ENCODE measurements at regions of chr3 and their contacts with region 1.

Region 1: DNA sequence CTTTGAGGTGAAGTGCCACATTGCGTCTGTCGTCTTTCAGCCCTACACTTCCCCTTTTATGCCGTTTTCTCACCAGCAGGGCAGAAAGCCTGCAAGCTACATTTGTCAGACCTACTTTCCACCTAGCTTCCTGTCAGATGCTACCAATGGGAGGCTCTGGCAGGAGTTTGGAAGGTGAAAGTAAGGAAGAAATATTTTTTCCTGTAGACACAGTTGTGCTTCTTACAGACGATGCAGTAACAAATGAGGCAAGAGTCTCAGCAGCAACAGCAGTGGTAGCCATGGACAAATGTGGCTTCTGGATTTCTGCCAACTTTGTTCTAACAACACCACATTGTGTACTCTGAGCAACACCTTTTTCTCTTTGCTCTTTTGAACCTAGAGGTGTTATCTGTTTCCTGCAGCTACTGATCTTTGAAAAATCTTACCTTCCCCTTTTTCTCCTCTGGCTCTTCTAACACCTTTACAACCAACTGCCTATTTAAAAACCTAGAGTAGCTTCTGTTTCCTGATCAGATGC is 70.6 kb upstream of the STT3B start:
- DNase-seq: peak; percentile 81 to 88 (median 88)
- H3K4me3 ChIP-seq: peak overlapping the region; percentile 42 to 51
- H3K4me3 Mint-ChIP-seq: peak overlapping the region; percentile 68 to 92 (median 81)
- H3K27ac ChIP-seq: peak overlapping the region; percentile 45
- H3K27ac Mint-ChIP-seq: peak overlapping the region; percentile 88 to 98 (median 94)
- H3K4me1 ChIP-seq: peaks cover 68% of the 10 kb centered on the region
- H3K4me1 Mint-ChIP-seq: peaks cover 48 to 74% (median 61%) of the 10 kb centered on the region in 4 donors
- H3K27me3 ChIP-seq: no peaks in the 10 kb centered on the region
- H3K27me3 Mint-ChIP-seq: no peaks in the 10 kb centered on the region

Region 2: GRCh38 chr3:31227131-31227562 is 235.0 kb before region 1 on chr3:
- CTCF ChIA-PET with region 1: interaction called, 7 read pairs
- POLR2A ChIA-PET with region 1: interaction called, 41 read pairs
- intact Hi-C with region 1: loop called (anchors 2 kb)
- DNase-seq: peak; percentile 49 to 82 (median 73)
- H3K4me3 ChIP-seq: no peak overlapping the region
- H3K4me3 Mint-ChIP-seq: peak overlapping the region; percentile 38 to 74 (median 64)
- H3K27ac ChIP-seq: peak overlapping the region; percentile 45
- H3K27ac Mint-ChIP-seq: peak overlapping the region; percentile 81 to 96 (median 93)
- H3K4me1 ChIP-seq: peaks cover 99% of the 10 kb centered on the region
- H3K4me1 Mint-ChIP-seq: peaks cover 71 to 96% (median 86%) of the 10 kb centered on the region in 4 donors
- H3K27me3 ChIP-seq: no peaks in the 10 kb centered on the region
- H3K27me3 Mint-ChIP-seq: no peaks in the 10 kb centered on the region

Region 3: DNA sequence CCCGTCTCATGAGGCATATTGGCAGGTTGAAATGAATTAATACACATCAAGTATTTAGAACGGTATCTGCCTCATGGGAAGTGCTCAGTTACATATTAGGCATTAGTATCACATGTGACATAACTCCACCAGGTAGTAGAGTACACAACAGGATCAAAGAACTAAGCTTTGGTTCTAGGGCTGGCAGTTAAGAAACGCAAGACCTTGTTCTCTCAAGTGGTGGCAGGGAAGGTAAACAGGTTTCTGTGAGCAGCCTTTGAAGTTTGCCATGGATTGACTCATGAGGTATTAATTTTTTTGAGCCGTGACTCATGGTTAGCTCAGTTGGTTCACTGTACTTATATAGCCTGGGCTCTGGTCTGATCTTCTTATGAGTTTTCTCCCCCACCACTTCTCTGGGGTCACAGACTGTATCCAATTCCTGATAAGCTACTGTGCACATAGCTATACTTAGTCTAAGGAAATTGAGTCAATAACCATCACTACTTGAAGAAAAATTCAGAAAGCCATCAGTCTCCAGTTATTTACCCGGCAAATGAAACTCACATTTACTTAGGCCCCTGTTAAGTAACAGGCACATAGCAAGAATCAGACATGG is 85.0 kb before region 1 on chr3:
- CTCF ChIA-PET with region 1: interaction called, 4 read pairs
- POLR2A ChIA-PET with region 1: interaction called, 4 read pairs
- intact Hi-C with region 1: loop called (anchors 5 kb)
- DNase-seq: peak; percentile 47 to 68 (median 59)
- H3K4me3 ChIP-seq: no peak overlapping the region
- H3K4me3 Mint-ChIP-seq: no peak overlapping the region
- H3K27ac ChIP-seq: no peak overlapping the region
- H3K27ac Mint-ChIP-seq: peak overlapping the region in 4 of 7 donors; percentile 19 to 49 (median 33)
- H3K4me1 ChIP-seq: peaks cover 13% of the 10 kb centered on the region
- H3K4me1 Mint-ChIP-seq: peaks cover 11 to 21% (median 15%) of the 10 kb centered on the region in 4 donors
- H3K27me3 ChIP-seq: no peaks in the 10 kb centered on the region
- H3K27me3 Mint-ChIP-seq: no peaks in the 10 kb centered on the region

Region 4: GRCh38 chr3:31439890-31440750 is 22.0 kb before region 1 on chr3:
- CTCF ChIA-PET with region 1: interaction called, 4 read pairs
- POLR2A ChIA-PET with region 1: interaction called, 4 read pairs
- intact Hi-C with region 1: loop called (anchors 2 kb)
- DNase-seq: no peak
- H3K4me3 ChIP-seq: no peak overlapping the region
- H3K4me3 Mint-ChIP-seq: no peak overlapping the region
- H3K27ac ChIP-seq: no peak overlapping the region
- H3K27ac Mint-ChIP-seq: peak overlapping the region in 2 of 7 donors; percentile 3 to 6
- H3K4me1 ChIP-seq: peaks cover 5% of the 10 kb centered on the region
- H3K4me1 Mint-ChIP-seq: peaks cover 6 to 14% (median 8%) of the 10 kb centered on the region in 4 donors
- H3K27me3 ChIP-seq: no peaks in the 10 kb centered on the region
- H3K27me3 Mint-ChIP-seq: no peaks in the 10 kb centered on the region

Region 5: DNA sequence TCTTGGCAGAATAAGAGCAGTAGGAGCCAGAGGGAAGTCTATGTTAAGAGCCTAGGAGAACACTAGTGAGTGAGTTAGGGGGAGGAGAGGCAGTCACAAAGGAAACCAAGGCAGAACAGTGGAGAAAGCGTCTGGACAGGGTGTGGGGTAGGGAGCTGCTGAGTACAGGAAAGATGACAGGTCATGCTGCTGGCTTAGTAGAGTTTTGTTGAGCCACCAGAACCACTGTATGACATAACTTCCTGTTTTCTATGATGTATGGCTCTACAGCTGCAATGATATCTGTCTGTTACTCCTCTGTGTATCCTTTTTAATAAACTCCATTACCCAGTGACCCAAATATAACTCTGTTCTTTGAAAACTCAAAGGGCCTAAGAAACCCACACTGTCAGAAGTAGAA is 60.0 kb after region 1 on chr3:
- CTCF ChIA-PET with region 1: interaction called, 3 read pairs
- POLR2A ChIA-PET with region 1: interaction called, 15 read pairs
- intact Hi-C with region 1: no loop called
- DNase-seq: peak in 4 of 5 donors; percentile 29 to 59 (median 36)
- H3K4me3 ChIP-seq: no peak overlapping the region
- H3K4me3 Mint-ChIP-seq: peak overlapping the region in 6 of 8 donors; percentile 13 to 70 (median 59)
- H3K27ac ChIP-seq: no peak overlapping the region
- H3K27ac Mint-ChIP-seq: peak overlapping the region in 6 of 7 donors; percentile 11 to 63 (median 45)
- H3K4me1 ChIP-seq: peaks cover 16% of the 10 kb centered on the region
- H3K4me1 Mint-ChIP-seq: peaks cover 9 to 22% (median 18%) of the 10 kb centered on the region in 4 donors
- H3K27me3 ChIP-seq: no peaks in the 10 kb centered on the region
- H3K27me3 Mint-ChIP-seq: no peaks in the 10 kb centered on the region

Measured in CD4-positive, alpha-beta memory T cell (primary cell).